Common myeloid progenitor, CD34-positive (primary cell): ENCODE measurements at regions of chr9 and their contacts with region 1.

Region 1: DNA sequence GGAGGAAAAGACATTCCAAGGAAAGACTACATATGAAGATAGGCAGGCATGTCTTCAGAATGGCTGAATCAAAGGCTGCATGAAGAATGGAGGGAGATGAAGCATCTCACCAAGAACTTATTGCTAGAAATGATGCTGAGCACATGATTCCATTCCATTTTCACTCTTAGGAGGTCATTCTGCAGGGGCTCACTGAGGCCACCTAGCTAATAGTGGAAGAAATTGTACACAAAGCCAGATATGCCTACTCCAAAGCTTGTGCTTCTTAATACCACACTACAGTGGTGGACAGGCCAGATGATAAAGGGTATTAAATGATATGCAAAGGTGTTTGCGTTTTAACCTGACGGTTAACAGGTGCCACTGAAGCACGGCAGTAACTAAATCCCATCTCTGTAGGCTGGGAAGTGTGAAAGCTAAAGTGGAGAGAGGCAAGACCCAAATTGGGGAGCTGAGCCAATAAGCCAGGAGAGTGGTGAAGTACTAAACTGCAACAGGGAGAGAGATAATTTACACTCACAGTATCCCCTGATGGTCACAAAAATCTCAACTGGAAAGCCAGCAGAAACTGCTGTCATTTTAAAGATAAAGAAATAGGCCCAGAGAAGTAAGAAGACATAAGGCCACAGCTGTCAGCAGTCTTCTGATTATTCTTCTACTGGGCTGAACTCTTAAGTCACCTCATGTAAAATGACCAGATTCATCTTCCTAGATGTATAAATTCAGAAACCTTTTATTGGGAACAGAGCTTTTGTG is 14.6 kb downstream of the NDUFA8 start:
- DNase-seq: peak in 2 of 3 donors; percentile 53 to 57
- H3K4me3 ChIP-seq: no peak overlapping the region
- H3K27ac ChIP-seq: no peak overlapping the region
- H3K4me1 ChIP-seq: peaks cover 0 to 17% (median 12%) of the 10 kb centered on the region in 4 experiments
- H3K27me3 ChIP-seq: no peaks in the 10 kb centered on the region

Region 2: DNA sequence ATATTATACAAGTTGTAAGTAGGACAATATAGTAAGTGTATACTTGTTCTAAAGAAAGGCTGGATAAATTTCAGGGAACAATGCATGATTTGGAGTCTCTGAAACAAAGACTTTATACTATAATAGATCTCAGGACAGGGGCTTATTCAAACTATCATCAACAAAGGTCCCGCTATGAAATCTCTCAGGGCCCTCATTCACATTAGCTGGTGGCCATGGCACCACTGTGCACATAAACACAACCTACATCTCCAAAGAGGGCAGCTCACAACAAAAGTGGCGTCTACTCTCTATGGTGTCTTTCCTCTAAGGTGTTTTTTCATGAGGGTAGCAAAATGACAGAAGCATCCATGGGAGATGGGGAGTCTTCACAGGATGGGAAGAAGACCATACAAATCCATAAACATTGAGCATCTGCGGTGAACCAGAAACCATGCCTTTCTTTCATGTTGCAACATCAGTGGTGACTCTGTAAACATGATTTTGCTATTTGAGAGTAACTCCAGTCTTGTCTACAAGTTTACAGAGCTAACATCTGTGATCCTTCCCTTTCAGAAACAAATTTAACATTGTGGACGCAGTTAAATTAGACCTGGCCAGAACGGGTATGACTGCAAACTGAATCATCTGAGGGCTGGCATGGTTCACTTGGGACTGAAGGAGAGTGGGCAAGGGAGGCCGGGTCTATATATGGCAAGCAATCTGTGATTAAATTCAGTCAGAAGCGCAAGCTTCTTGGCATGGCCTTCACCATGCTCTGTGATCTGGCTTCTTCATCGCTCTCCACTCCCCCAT is 57.4 kb before region 1 on chr9:
- CTCF ChIA-PET with region 1: no interaction called
- POLR2A ChIA-PET with region 1: no interaction called
- DNase-seq: no peak
- H3K4me3 ChIP-seq: no peak overlapping the region
- H3K27ac ChIP-seq: no peak overlapping the region
- H3K4me1 ChIP-seq: peaks cover 3 to 13% (median 9%) of the 10 kb centered on the region in 4 experiments
- H3K27me3 ChIP-seq: no peaks in the 10 kb centered on the region

Region 3: GRCh38 chr9:122113574-122113973 is 31.4 kb before region 1 on chr9:
- CTCF ChIA-PET with region 1: no interaction called
- POLR2A ChIA-PET with region 1: no interaction called
- DNase-seq: no peak
- H3K4me3 ChIP-seq: no peak overlapping the region
- H3K27ac ChIP-seq: no peak overlapping the region
- H3K4me1 ChIP-seq: no peaks in the 10 kb centered on the region
- H3K27me3 ChIP-seq: peaks cover 0 to 3% (median 0%) of the 10 kb centered on the region in 5 experiments

Region 4: GRCh38 chr9:122131401-122132001 is 13.5 kb before region 1 on chr9:
- CTCF ChIA-PET with region 1: interaction called, 110 read pairs
- POLR2A ChIA-PET with region 1: interaction called, 6 read pairs
- DNase-seq: no peak
- H3K4me3 ChIP-seq: no peak overlapping the region
- H3K27ac ChIP-seq: no peak overlapping the region
- H3K4me1 ChIP-seq: peaks cover 0 to 13% (median 7%) of the 10 kb centered on the region in 4 experiments
- H3K27me3 ChIP-seq: peaks cover 0 to 12% (median 2%) of the 10 kb centered on the region in 5 experiments

Region 5: GRCh38 chr9:122159026-122159924 is 14.3 kb after region 1 on chr9 and contains the starts of genes MORN5 and NDUFA8:
- CTCF ChIA-PET with region 1: interaction called, 22 read pairs
- POLR2A ChIA-PET with region 1: no interaction called
- DNase-seq: peak; percentile 95 to 98 (median 97)
- H3K4me3 ChIP-seq: peak within 1 kb of the TSS; percentile 86 to 97 (median 92)
- H3K27ac ChIP-seq: peak within 1 kb of the TSS; percentile 69 to 92
- H3K4me1 ChIP-seq: peaks cover 5 to 21% (median 11%) of the 10 kb centered on the region in 4 experiments
- H3K27me3 ChIP-seq: no peaks in the 10 kb centered on the region

Region 6: DNA sequence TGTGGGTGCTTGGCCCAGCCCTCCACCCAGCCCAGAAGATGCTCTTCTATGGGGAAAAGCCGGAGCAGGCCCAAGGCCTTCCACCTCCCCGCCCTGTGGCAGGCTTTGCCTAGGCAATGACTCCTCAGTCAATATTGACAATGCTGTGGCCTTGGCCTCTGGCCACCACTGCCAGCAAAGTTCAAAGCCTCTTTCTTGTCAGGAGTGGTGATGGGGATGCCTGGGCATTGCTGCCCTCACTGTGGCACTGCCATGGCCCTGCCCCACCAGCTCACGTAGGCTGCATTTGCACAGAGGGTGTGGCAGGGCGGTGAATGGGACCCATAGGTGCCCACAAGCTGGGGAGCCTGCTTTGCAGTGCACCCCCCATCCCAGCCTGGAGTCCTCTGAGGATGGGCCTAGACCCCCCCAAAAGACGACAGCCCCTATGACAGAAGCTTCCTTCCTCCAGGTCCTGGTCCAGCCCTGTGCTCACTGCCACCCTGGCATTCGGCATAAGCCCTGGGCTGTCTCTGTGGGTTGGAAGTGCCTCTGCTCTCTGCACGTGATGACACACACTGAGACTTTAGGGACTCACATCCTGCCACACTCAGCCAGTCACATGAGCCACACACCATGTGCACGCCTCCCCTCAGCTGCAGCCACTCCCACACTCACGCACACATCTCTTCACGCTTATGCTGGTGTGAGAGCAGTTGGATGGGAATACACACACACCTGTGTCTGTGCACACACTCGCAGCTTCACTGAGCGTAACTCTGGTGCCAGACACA is 45.8 kb after region 1 on chr9:
- CTCF ChIA-PET with region 1: no interaction called
- POLR2A ChIA-PET with region 1: no interaction called
- DNase-seq: peak in 1 of 3 donors; percentile 20
- H3K4me3 ChIP-seq: no peak overlapping the region
- H3K27ac ChIP-seq: no peak overlapping the region
- H3K4me1 ChIP-seq: no peaks in the 10 kb centered on the region
- H3K27me3 ChIP-seq: no peaks in the 10 kb centered on the region